ENCODE measurements at regions of chr9 and their contacts with region 1.

Region 1: GRCh38 chr9:98796364-98797101 is at the start of gene ANKS6:
- DNase-seq: no peak
- H3K4me3 ChIP-seq: peak within 1 kb of the TSS; percentile 51
- H3K27me3 ChIP-seq: no peaks in the 10 kb centered on the region
- CTCF ChIP-seq: 0 out of 2 replicates have a peak, but pooled peaks have one; percentile 1
- polyA plus RNA-seq, gene ANKS6: 9.9 and 13.0 TPM in 2 replicates

Region 2: DNA sequence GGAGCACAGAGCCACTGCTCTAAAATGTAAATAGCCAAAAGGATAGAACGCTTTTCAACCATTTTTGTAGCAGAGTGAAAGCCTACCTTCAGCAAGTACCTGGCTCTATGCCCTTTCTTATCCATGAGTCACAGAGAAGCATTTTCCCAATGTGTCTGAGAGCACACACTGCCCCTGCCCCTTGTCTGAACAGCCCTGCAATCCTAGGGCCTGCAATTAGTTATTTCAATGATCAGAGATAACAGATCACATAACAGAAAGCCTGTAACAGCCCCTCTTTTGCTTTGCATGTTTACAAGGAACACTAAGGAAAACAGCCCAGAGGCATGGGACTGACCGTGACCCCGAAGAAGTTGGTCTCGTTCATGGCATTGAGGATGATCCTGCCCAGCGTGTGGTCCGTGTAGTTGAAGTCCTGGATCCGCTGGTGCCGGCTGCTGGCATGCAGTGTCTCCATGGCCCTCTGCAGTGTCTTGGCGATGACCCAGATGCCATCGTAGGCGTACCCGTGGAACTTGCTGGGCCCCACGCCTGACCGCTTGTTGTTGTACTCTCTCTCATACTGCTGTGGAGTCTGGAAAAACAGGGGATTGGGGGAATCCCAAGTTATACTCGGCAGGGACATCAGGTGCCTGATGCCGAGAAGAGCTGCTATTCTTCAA is 342.8 kb before region 1 on chr9:
- CTCF ChIA-PET with region 1: no interaction called
- POLR2A ChIA-PET with region 1: no interaction called
- DNase-seq: no peak
- H3K4me3 ChIP-seq: no peak overlapping the region
- H3K27me3 ChIP-seq: no peaks in the 10 kb centered on the region
- CTCF ChIP-seq: no peak

Region 3: DNA sequence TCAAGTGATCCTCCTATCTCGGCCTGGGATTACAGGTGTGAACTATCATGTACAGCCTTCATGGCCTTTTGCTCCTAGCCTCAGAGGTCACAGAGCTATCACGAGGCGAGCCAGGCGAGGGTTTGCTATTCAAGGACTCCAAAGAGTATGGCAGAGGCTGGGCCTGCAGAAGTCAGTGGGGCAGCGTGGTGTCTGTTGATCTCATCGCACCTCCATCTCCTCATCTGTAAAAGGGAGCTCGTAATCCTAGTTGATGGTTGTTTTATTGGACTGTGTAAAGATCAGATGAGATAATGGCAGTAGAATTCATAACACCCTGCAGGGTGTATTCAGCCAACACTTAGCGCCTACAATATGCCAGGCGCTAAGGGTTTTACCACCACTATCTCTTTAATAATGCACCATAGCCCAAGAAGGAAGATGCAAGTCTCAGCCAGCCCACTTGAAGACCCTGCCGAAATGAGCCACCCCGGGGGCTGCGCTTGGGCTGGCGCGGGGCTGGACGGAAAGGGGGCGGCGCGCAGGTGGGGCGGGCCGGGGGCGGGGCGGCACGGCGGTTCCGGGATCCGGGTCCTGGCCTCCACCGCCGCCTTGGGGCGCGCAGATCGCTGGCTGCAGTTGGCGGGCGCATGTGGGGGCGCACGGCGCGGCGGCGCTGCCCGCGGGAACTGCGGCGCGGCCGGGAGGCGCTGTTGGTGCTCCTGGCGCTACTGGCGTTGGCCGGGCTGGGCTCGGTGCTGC is 10.7 kb after region 1 on chr9 and contains the start of gene GALNT12:
- CTCF ChIA-PET with region 1: interaction called, 13 read pairs
- POLR2A ChIA-PET with region 1: no interaction called
- DNase-seq: no peak
- H3K4me3 ChIP-seq: peak within 1 kb of the TSS; percentile 50
- H3K27me3 ChIP-seq: peaks cover 16% of the 10 kb centered on the region
- CTCF ChIP-seq: no peak
- polyA plus RNA-seq, gene GALNT12: 4.2 and 4.8 TPM in 2 replicates

Region 4: GRCh38 chr9:99936947-99937587 is 1140.5 kb after region 1 on chr9:
- CTCF ChIA-PET with region 1: no interaction called
- POLR2A ChIA-PET with region 1: interaction called, 13 read pairs
- DNase-seq: no peak
- H3K4me3 ChIP-seq: no peak overlapping the region
- H3K27me3 ChIP-seq: no peaks in the 10 kb centered on the region
- CTCF ChIP-seq: no peak

Measured in BJ (cell line).